Psoas muscle (tissue), 8 donors: ENCODE measurements at regions of chr7 and their contacts with region 1.

Region 1: DNA sequence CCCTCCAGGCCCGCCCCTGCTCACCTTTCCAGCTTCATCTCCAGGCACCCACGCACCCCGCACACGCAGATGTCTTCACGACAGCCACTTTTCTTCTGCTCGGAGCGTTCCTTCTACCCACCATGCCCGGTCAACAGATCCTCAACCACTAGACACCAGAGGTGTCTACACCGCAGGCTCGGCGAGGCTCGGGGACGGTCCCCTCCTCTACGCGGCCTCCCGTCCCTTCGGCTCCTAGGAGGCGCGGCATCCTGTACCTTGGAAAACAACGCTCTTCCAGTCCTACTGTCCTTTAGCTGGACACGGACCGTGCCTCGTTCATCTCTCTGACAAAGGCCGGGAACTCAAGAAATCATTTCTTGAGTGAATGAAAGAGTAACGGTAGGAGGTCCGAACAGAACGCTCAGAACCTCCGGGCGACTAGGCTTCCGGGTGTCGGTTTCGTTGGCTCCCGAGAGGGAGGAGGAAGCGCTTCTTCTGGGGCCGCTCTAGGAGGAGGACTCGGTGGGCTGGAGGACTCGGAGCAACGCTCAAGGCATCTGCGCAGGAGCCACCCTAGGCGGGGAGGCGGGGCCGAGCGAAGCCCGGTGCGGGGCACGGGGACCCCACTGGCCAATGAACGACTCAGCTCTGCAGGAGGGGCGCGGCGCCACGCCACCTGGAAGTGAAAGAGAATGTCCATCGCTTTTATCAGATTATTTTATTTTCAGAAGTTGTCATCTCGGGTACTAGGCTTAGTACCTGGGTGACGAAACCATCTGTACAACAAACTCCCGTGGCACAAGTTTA is 7.2 kb upstream of the FIS1 start:
- DNase-seq: peak; percentile 99
- ATAC-seq: peak; percentile 100
- H3K4me3 ChIP-seq: peak overlapping the region; percentile 98
- H3K27ac ChIP-seq: peak overlapping the region; percentile 75
- H3K4me1 ChIP-seq: peaks cover 6% of the 10 kb centered on the region
- H3K27me3 ChIP-seq: peaks cover 0 to 3% (median 0%) of the 10 kb centered on the region in 3 donors
- CTCF ChIP-seq: no peak

Region 2: DNA sequence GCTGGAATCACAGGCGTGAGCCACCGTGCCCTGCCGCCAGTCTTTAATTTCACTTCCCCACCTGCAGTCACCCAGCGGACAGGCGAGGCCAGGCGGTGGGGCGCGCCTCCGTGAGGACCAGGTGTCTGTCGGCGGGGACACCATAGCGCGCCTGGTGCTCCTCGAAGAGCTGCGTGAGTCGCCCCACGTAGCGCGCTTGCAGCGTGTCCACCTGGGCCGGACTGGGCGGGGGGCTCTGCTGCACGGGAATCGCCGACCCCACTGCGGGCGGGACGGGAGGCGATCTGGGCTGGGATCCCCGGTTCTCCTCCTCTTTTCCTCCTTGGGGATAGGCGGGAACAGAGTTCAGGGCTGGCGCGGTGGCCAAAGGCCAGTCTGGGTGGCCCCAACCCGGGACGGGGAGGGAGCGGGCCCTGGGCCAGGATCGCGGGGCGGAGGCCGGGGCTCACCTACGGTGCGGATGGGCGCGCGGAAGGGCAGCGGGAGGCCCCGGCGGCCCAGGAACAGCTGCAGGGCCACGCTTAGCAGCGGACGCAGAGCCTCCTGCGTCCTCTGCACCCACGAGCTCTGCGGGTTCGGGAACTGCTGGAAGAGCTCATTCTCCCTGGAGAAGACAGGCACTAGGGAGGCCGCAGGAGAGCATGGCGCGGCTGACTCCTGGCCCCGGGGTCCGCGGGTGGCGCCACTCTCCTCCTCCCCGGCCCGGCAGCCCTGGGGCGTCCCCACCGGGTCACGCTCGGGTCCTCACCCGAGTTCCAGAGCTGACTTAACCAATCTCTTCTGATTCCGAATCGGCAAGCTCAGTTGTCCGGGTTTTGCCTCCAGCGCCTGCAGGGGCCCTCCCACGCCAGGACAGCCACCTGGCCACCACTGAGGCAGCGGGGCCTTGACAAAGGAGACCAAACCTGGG is 50.1 kb before region 1 on chr7:
- intact Hi-C with region 1: no loop called
- DNase-seq: no peak
- ATAC-seq: peak in 1 of 4 donors; percentile 32
- H3K4me3 ChIP-seq: peak overlapping the region; percentile 25
- H3K27ac ChIP-seq: no peak overlapping the region
- H3K4me1 ChIP-seq: peaks cover 6% of the 10 kb centered on the region
- H3K27me3 ChIP-seq: peaks cover 0 to 54% (median 18%) of the 10 kb centered on the region in 3 donors
- CTCF ChIP-seq: no peak

Region 3: DNA sequence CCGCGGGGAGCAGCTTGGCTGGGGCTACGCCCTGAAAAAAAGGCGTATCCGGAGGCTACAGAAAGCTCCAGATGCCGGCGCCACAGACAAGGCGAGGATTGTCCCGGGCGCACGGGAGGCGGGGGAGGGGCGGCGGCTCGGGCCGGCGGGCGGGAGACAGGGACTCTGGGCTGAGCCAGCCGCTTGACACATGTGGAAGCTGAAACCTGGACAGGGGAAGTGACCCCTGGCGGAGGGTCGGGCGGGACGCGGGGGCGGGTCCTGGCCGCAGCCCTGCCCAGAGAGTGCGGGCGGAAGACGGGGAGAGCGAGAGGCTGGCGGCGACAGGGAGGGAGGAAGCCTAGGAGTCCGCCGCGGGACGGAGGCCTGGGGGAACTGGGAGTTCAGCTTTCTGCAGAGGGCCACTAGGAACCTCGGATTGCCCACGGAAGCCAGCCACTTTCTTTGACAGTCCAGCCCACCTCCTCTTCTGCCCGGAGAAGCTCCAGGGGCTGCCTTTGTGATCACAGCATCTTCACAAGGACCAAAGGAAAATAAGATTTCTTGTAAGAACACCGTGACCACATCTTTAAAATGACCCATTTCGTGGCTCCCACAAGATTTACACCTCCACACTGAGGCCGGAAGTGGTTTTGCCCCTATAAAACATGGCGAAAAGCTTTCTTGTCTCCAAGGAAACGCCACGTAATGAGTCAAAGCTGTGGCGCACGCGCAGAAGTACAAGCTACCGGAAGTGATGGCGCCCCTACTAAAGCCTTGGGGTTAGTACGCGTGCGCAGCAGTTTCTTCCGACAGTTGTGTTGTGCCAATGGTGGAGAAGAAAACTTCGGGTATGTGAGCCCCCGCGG is 34.5 kb before region 1 on chr7 and contains the starts of genes PLOD3 and ZNHIT1:
- intact Hi-C with region 1: loop called in 1 of 2 experiments (anchors 5 kb)
- DNase-seq: peak; percentile 98 to 99
- ATAC-seq: peak; percentile 93 to 94 (median 94)
- H3K4me3 ChIP-seq: peak within 1 kb of the TSS; percentile 97
- H3K27ac ChIP-seq: peak within 1 kb of the TSS; percentile 88
- H3K4me1 ChIP-seq: peaks cover 20% of the 10 kb centered on the region
- H3K27me3 ChIP-seq: no peaks in the 10 kb centered on the region
- CTCF ChIP-seq: no peak
- total RNA-seq, gene PLOD3: 18.5 to 25.4 (median 20.4) TPM
- total RNA-seq, gene ZNHIT1: 40.8 to 58.1 (median 48.1) TPM